Heart left ventricle (tissue), 16 donors: ENCODE measurements at regions of chr7 and their contacts with region 1.

Region 1: DNA sequence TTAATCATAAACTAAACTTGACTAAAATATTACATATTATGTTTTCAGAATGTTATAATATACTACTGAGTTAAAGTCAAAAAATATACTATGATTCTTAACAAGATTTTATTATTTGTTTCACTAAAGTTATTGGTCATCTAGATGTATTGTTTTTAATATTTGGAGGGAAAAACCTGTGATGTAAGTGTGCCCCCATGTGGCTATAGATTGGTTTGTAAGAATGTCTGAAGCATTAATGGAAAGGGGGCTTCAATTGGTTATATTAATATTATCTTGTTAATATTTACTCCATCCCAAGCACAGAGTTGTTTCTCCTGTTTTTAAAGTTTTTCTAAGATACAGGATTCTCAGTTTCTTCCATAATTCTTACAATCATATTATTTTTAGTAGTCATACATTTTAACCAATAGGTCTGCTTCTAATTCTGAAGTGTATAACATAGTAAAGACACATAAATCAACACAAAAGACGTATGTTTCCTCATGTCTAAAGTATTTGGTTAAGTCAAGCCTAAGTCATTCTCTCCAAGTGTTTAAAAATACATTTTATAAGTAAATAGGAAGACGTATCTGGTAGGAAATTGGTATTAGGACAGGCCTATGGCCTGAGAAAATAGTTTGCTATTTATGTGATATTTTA is 58.0 kb downstream of the GNAT3 start:
- DNase-seq: no peak
- ATAC-seq: no peak
- H3K4me3 ChIP-seq: no peak overlapping the region
- H3K27ac ChIP-seq: no peak overlapping the region
- H3K4me1 ChIP-seq: no peaks in the 10 kb centered on the region
- H3K27me3 ChIP-seq: no peaks in the 10 kb centered on the region
- CTCF ChIP-seq: peak in 11 of 12 donors; percentile 26 to 66 (median 53)
- POLR2A ChIP-seq: no peak

Region 2: DNA sequence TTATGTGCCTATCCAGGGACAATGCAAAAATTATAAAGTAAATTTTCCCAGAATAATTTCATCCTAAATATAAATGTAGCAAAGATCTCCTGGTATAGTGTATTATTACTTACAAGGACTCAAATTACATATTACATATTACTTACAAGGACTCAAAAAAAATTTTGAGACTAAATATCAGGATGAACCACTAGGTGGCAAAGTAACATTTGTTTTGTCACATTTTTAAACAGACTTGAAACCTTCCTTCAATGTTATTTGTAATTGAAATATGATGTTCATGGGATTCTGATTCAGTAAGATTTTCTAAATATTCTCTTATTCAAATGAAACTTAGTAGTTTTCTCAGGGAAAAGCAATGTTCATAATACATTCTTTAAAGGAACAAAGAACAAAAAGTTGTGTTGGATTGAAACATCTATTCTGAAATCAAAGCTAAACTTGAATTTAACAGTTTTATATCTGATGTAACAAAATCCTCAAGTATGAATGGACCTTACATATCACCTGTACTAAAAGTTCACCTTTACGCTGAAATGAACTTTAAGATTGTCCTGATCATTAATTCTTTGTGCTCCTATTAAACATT is 393.5 kb before region 1 on chr7:
- intact Hi-C with region 1: loop called in 1 of 10 experiments (anchors 5 kb)
- DNase-seq: no peak
- ATAC-seq: no peak
- H3K4me3 ChIP-seq: no peak overlapping the region
- H3K27ac ChIP-seq: no peak overlapping the region
- H3K4me1 ChIP-seq: no peaks in the 10 kb centered on the region
- H3K27me3 ChIP-seq: no peaks in the 10 kb centered on the region
- CTCF ChIP-seq: peak; percentile 26 to 70 (median 59)
- POLR2A ChIP-seq: no peak